Heart right ventricle (tissue), 16 donors: ENCODE measurements at regions of chr4 and their contacts with region 1.

Region 1: GRCh38 chr4:17630228-17630627 is 15.8 kb downstream of the MED28 start:
- DNase-seq: no peak
- ATAC-seq: no peak
- H3K4me3 ChIP-seq: no peak overlapping the region
- H3K27ac ChIP-seq: no peak overlapping the region
- H3K4me1 ChIP-seq: no peaks in the 10 kb centered on the region
- H3K27me3 ChIP-seq: no peaks in the 10 kb centered on the region
- CTCF ChIP-seq: no peak

Region 2: DNA sequence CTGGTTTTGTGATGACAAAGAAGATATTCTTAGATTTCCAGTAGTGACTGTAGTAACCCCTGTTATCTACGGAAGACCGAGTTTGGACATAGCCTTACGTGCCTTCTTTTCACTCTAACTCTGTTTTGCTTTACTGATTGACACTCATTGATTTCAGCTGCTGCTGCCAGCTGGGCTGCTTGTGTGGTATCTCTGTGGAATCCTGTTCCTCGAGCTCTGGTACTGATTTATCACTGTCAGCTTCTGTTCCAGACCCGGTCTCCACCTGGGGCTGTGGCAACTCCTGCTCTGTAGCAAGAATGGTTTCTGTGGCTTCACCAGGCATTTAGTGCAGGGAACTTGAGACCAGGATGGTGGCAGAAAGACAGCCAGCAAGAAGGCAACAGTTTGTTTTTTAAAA is 77.8 kb before region 1 on chr4:
- intact Hi-C with region 1: loop called in 3 of 10 experiments (anchors 5 kb)
- DNase-seq: no peak
- ATAC-seq: no peak
- H3K4me3 ChIP-seq: no peak overlapping the region
- H3K27ac ChIP-seq: no peak overlapping the region
- H3K4me1 ChIP-seq: peaks cover 0 to 4% (median 0%) of the 10 kb centered on the region in 9 donors
- H3K27me3 ChIP-seq: peaks cover 0 to 25% (median 4%) of the 10 kb centered on the region in 7 donors
- CTCF ChIP-seq: no peak